HEK293T (cell line): ENCODE measurements at regions of chr19 and their contacts with region 1.

Region 1: DNA sequence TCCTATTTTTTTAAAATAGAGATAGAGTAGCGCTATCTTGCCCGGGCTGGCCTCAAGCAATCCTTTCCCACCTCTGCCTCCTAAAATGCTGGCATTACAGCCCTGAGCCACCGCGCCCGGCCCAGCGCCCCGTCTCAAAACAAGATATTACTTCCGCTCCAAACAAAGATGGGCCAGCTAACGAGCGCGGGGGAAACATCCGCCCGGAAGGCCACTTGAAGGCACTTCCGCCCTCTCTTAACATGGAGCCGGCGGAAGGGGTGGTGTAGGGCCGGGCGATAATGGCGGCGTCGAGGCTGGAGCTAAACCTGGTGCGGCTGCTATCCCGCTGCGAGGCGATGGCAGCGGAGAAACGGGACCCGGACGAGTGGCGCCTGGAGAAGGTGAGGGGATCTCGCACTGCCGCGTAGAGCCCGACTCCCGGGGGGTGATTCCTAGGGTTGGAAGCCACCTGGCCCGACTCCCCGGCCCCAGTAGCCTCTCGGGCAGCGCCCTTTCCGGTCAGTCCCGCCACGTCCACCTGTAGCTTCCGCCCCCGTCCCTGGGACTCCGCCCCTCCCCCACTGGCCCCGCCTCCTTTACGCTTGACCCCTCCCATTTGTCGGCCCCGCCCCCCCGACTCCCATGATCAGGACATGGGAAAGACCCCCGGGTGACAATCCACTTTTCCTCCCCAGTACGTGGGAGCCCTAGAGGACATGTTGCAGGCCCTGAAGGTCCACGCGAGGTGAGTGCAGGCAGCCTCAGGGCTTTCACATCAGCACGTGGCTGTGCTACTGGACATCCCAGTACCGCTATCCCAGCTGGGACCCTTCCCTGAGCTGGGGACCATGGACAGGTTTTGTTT is at the start of gene USE1:
- DNase-seq: peak; percentile 87

Region 2: GRCh38 chr19:17226002-17226933 is 10.9 kb after region 1 on chr19 and contains the start of gene OCEL1:
- CTCF ChIA-PET with region 1: interaction called, 5 read pairs
- POLR2A ChIA-PET with region 1: interaction called, 72 read pairs
- DNase-seq: peak; percentile 93

Region 3: DNA sequence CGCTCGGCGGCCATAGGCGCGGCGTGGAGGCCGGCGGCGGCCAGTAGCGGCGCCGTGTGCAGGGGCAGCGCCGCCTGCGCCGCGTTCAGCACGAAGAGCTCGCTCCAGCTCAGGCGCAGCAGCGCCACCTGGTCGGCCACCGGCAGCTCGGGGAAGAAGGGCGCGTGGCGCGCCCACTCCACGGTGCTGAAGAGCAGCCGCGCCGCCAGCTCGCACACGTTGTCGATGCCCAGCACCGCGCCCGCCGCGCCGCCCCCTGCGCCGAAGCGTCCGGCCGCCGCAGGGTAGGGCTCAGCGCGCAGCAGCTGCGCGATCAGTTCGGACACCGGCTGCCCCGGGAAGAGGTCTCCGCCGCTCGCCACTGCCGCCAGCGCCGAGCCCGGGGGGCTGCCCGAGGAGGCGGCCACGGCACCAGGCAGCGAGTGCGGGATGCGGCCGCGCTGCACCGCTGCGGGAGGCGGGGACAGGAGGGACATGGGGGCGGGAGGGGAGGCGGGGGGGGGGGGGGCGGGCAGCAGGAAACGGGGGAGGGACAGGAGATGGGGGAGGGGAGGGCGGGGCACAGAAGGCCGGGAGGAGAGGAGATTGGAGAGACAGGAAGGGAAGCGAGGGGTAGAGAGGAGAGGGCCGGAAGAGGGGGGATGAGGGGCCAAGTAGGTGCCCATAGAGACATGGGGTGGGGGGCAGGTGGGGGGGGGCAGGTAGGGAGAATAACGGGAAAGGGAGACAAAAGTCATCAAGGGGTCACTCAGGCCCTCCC is 20.4 kb after region 1 on chr19:
- CTCF ChIA-PET with region 1: no interaction called
- POLR2A ChIA-PET with region 1: interaction called, 20 read pairs
- DNase-seq: peak; percentile 51

Region 4: DNA sequence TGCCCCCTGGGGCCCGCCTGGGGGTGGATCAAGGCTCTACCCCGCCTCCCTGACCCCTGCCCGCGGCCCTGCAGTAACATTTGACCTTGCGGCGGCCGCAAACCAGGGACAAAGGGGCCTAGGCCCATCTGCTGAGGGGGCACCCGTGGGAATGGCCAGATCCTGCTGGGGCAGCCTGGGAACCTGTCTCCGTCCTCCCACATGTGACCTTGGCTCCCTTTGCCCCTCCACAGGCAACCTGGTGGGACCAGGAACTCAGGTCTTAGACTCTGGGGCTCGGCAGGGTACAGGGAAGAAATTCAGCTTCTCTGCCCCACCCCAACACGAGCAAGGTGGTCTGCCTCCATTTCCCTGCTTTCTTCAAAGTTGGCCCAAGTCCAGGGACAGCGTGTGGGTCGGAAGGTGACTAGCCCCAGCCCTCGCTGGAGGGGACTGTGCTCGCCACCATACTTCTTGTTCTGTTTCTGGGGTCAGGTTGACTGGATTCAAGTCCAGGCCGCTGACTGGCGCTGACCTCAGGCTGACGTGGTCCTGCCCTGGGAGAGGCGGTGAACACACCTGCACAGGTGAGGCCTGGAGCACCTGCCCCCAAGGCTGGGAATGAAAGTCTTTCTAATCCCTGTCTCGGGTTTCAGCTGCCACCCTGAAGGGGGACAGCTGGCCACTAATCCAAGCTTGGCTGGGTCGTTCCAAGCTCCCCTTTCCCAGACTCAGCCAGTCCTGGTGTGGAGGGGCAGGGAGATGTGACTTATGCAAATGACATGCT is 32.8 kb after region 1 on chr19:
- CTCF ChIA-PET with region 1: no interaction called
- POLR2A ChIA-PET with region 1: interaction called, 10 read pairs
- DNase-seq: no peak

Region 5: GRCh38 chr19:17266975-17267788 is 51.8 kb after region 1 on chr19 and contains the start of gene BABAM1:
- CTCF ChIA-PET with region 1: no interaction called
- POLR2A ChIA-PET with region 1: interaction called, 12 read pairs
- DNase-seq: peak; percentile 96